ENCODE measurements at regions of chr12 and their contacts with region 1.

Region 1: GRCh38 chr12:98593351-98594049 is at the start of gene SLC25A3:
- DNase-seq: peak; percentile 95 to 96
- H3K4me3 ChIP-seq: peak within 1 kb of the TSS; percentile 97
- H3K4me3 Mint-ChIP-seq: peak within 1 kb of the TSS; percentile 98
- H3K27ac Mint-ChIP-seq: peak within 1 kb of the TSS; percentile 98
- H3K4me1 ChIP-seq: peaks cover 17% of the 10 kb centered on the region
- H3K4me1 Mint-ChIP-seq: peaks cover 7% of the 10 kb centered on the region
- H3K27me3 ChIP-seq: no peaks in the 10 kb centered on the region
- H3K27me3 Mint-ChIP-seq: no peaks in the 10 kb centered on the region
- CTCF ChIP-seq: peak in 1 of 2 experiments; percentile 13
- total RNA-seq, gene SLC25A3: 888 and 920 TPM in 2 replicates

Region 2: DNA sequence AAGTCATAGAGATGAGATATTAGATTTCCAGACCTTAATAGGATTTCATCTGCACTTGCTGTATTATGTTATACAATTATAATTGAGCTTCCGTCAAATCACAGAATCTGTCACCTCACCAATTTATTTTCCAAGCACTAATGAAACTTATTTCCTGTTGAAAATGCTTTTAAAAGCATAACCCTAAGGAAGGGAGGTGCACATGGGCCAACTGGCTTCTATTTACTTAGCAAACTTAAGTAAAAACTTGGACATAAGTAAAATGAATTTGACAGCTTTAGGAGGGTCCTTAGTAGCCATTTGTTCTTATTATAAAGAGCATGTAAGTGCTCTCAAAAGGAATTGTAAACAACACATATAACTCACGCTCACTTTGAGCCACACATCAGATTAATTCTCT is 540.3 kb before region 1 on chr12:
- CTCF ChIA-PET with region 1: no interaction called
- POLR2A ChIA-PET with region 1: no interaction called
- intact Hi-C with region 1: no loop called
- DNase-seq: no peak
- H3K4me3 ChIP-seq: no peak overlapping the region
- H3K4me3 Mint-ChIP-seq: no peak overlapping the region
- H3K27ac Mint-ChIP-seq: no peak overlapping the region
- H3K4me1 ChIP-seq: no peaks in the 10 kb centered on the region
- H3K4me1 Mint-ChIP-seq: no peaks in the 10 kb centered on the region
- H3K27me3 ChIP-seq: no peaks in the 10 kb centered on the region
- H3K27me3 Mint-ChIP-seq: no peaks in the 10 kb centered on the region
- CTCF ChIP-seq: no peak

Region 3: GRCh38 chr12:98424726-98425401 is 168.6 kb before region 1 on chr12:
- CTCF ChIA-PET with region 1: interaction called, 5 read pairs
- POLR2A ChIA-PET with region 1: no interaction called
- intact Hi-C with region 1: loop called (anchors 2 kb)
- DNase-seq: peak; percentile 69 to 75
- H3K4me3 ChIP-seq: no peak overlapping the region
- H3K4me3 Mint-ChIP-seq: no peak overlapping the region
- H3K27ac Mint-ChIP-seq: no peak overlapping the region
- H3K4me1 ChIP-seq: peaks cover 6% of the 10 kb centered on the region; the same call in 1 of the 2 replicates
- H3K4me1 Mint-ChIP-seq: peaks cover 2% of the 10 kb centered on the region
- H3K27me3 ChIP-seq: no peaks in the 10 kb centered on the region
- H3K27me3 Mint-ChIP-seq: no peaks in the 10 kb centered on the region
- CTCF ChIP-seq: peak; percentile 75

Region 4: GRCh38 chr12:98475565-98475908 is 118.0 kb before region 1 on chr12:
- CTCF ChIA-PET with region 1: no interaction called
- POLR2A ChIA-PET with region 1: no interaction called
- intact Hi-C with region 1: no loop called
- DNase-seq: no peak
- H3K4me3 ChIP-seq: no peak overlapping the region
- H3K4me3 Mint-ChIP-seq: peak overlapping the region; percentile 39
- H3K27ac Mint-ChIP-seq: peak overlapping the region; percentile 93
- H3K4me1 ChIP-seq: peaks cover 6% of the 10 kb centered on the region; the same call in 1 of the 2 replicates
- H3K4me1 Mint-ChIP-seq: peaks cover 10% of the 10 kb centered on the region
- H3K27me3 ChIP-seq: no peaks in the 10 kb centered on the region
- H3K27me3 Mint-ChIP-seq: no peaks in the 10 kb centered on the region
- CTCF ChIP-seq: no peak

Region 5: DNA sequence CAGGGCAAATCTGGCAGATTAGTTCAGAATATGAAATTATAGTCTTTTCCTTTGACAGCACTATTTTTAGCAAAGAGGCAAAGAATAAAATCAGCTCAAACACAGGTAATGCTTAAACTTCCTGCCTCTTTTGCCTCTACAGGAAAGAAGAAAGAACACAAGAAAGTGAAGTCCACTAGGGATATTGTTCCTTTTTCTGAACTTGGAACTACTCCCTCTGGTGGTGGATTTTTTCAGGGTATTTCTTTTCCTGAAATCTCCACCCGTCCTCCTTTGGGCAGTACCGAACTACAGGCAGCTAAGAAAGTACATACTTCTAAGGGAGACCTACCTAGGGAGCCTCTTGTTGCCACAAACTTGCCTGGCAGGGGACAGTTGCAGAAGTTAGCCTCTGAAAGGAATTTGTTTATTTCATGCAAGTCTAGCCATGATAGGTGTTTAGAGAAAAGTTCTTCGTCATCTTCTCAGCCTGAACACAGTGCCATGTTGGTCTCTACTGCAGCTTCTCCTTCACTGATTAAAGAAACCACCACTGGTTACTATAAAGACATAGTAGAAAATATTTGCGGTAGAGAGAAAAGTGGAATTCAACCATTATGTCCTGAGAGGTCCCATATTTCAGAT is 60.7 kb before region 1 on chr12:
- CTCF ChIA-PET with region 1: no interaction called
- POLR2A ChIA-PET with region 1: interaction called, 3 read pairs
- intact Hi-C with region 1: loop called (anchors 1 kb)
- DNase-seq: peak in 1 of 2 experiments; percentile 77
- H3K4me3 ChIP-seq: no peak overlapping the region
- H3K4me3 Mint-ChIP-seq: no peak overlapping the region
- H3K27ac Mint-ChIP-seq: peak overlapping the region; percentile 69
- H3K4me1 ChIP-seq: peaks cover 19% of the 10 kb centered on the region
- H3K4me1 Mint-ChIP-seq: peaks cover 4% of the 10 kb centered on the region
- H3K27me3 ChIP-seq: no peaks in the 10 kb centered on the region
- H3K27me3 Mint-ChIP-seq: no peaks in the 10 kb centered on the region
- CTCF ChIP-seq: peak; percentile 62 to 75

Region 6: DNA sequence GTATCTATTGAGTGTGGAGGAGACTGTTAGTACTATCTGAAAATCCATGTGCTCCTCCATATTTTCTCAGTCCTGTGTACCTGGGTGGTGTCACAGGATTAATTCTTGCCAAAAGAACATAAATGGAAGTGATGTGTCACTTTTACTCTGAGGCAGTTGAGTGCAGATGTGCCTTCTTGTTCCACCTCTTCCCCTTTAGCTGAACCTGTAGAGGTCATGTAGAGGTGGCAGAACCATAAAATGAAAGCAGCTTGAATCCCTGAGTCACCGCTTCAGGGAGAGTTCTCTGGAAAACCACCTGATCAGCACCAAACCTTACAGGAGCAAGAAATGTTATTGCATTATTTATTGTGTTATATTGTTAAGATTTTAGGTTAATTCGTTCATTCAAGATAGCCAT is 14.7 kb before region 1 on chr12:
- CTCF ChIA-PET with region 1: interaction called, 10 read pairs
- POLR2A ChIA-PET with region 1: interaction called, 16 read pairs
- intact Hi-C with region 1: loop called (anchors 1 kb)
- DNase-seq: no peak
- H3K4me3 ChIP-seq: no peak overlapping the region
- H3K4me3 Mint-ChIP-seq: no peak overlapping the region
- H3K27ac Mint-ChIP-seq: no peak overlapping the region
- H3K4me1 ChIP-seq: peaks cover 39% of the 10 kb centered on the region
- H3K4me1 Mint-ChIP-seq: peaks cover 14% of the 10 kb centered on the region
- H3K27me3 ChIP-seq: no peaks in the 10 kb centered on the region
- H3K27me3 Mint-ChIP-seq: no peaks in the 10 kb centered on the region
- CTCF ChIP-seq: no peak

Region 7: DNA sequence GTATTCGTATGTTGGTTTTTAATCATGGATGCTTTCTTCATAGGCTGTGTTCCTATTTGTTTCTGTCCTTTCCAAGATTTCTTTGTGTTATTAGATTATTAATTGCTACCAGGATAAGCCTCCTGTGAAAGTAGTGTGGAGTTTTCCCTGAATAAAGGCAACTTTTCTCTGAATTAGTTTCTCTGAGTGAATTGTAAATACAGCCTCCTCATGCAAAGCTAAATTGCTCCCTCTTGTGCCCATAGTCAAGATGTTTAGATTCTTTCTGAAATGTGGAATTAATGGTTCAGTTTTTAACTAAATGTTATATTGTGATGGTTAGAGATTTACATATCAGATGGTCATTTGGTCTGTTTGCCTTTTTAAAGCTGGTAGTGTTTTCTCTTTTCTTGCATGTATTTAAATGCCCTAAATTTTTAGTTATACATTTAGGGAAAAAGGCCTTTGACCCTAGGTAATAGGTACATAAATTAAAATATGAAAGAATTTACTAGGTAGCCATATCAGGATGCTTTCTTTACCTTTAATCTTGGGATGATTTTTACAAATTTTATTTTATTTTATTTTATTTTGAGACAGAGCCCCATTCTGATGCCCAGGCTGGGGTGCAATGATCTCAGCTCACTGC is 60.5 kb after region 1 on chr12:
- CTCF ChIA-PET with region 1: no interaction called
- POLR2A ChIA-PET with region 1: interaction called, 3 read pairs
- intact Hi-C with region 1: loop called (anchors 2 kb)
- DNase-seq: peak in 1 of 2 experiments; percentile 46
- H3K4me3 ChIP-seq: no peak overlapping the region
- H3K4me3 Mint-ChIP-seq: no peak overlapping the region
- H3K27ac Mint-ChIP-seq: no peak overlapping the region
- H3K4me1 ChIP-seq: 0 out of 2 replicates have a peak, but pooled peaks cover 5% of the 10 kb centered on the region
- H3K4me1 Mint-ChIP-seq: peaks cover 7% of the 10 kb centered on the region
- H3K27me3 ChIP-seq: no peaks in the 10 kb centered on the region
- H3K27me3 Mint-ChIP-seq: no peaks in the 10 kb centered on the region
- CTCF ChIP-seq: peak; percentile 61 to 70